ENCODE measurements at regions of chr11 and their contacts with region 1.

Region 1: GRCh38 chr11:1652771-1653540 is 23.4 kb downstream of the KRTAP5-5 start:
- DNase-seq: peak; percentile 29 to 52
- ATAC-seq: peak; percentile 66 to 80
- H3K4me3 ChIP-seq: no peak overlapping the region
- H3K27ac ChIP-seq: no peak overlapping the region
- H3K4me1 ChIP-seq: no peaks in the 10 kb centered on the region
- H3K27me3 ChIP-seq: no peaks in the 10 kb centered on the region
- CTCF ChIP-seq: peak; percentile 84 to 99 (median 96)
- POLR2A ChIP-seq: no peak

Region 2: DNA sequence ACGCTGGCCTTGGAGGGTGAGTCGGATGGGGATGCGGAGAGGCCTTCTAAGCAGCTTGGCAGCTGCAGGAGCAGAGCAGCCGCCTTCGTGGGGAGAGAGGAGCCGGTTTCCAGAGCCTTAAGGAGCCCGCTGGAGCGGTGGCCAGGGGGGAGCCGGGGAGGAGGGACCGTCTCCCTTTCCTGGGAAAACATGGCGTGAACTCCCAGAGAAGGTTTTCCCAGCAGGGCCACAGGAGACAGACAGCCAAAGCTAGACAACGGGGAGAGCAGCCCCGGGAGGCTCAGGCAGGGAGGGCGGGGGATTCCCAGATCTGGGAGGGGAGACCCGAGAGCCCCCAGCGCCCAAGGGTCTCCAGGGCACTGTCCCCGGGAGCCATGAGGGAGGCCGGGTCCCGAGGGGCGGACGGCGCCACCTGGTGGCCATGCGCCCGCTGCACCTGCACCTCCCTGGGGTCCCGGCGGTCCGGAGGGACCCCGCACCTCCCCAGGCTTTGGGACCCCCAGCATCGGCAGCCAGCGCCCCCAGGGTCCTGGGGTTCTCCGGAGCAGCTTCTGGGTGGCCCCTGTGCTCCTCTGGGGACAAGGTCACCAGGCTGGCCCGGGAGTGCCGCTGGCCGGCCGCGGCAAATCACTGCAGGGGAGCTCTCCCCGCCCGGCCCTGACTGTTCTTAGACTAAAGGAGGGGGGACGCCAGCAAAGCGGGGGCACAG is 179.4 kb after region 1 on chr11:
- in situ Hi-C with region 1: no loop called
- intact Hi-C with region 1: loop called (anchors 2 kb)
- DNase-seq: no peak
- ATAC-seq: peak; percentile 62 to 77
- H3K4me3 ChIP-seq: peak overlapping the region in 3 of 4 donors; percentile 7 to 17 (median 9)
- H3K27ac ChIP-seq: no peak overlapping the region
- H3K4me1 ChIP-seq: peaks cover 0 to 1% of the 10 kb centered on the region in 2 donors
- H3K27me3 ChIP-seq: no peaks in the 10 kb centered on the region
- CTCF ChIP-seq: peak; percentile 95 to 99 (median 99)
- POLR2A ChIP-seq: no peak

Measured in gastrocnemius medialis (tissue), 4 donors.